HCT116 (cell line): ENCODE measurements at regions of chr1 and their contacts with region 1.

Region 1: GRCh38 chr1:201268604-201269151 is 14.6 kb upstream of the PKP1 start:
- DNase-seq: no peak
- ATAC-seq: no peak
- H3K4me3 ChIP-seq: no peak overlapping the region
- H3K27ac ChIP-seq: no peak overlapping the region
- H3K4me1 ChIP-seq: peaks cover 0 to 31% of the 10 kb centered on the region in 2 experiments; a peak in 2 of 4 replicates
- H3K27me3 ChIP-seq: peaks cover 11% of the 10 kb centered on the region; the same call in 1 of the 2 replicates
- CTCF ChIP-seq: no peak
- POLR2A ChIP-seq: no peak
- RAD21 ChIP-seq: no peak

Region 2: GRCh38 chr1:201309426-201309825 is 40.7 kb after region 1 on chr1:
- CTCF ChIA-PET with region 1: no interaction called
- POLR2A ChIA-PET with region 1: interaction called, 3 read pairs
- RAD21 ChIA-PET with region 1: no interaction called
- intact Hi-C with region 1: loop called (anchors 5 kb)
- DNase-seq: peak; percentile 39
- ATAC-seq: peak; percentile 74
- H3K4me3 ChIP-seq: no peak overlapping the region
- H3K27ac ChIP-seq: no peak overlapping the region
- H3K4me1 ChIP-seq: peaks cover 36 to 60% of the 10 kb centered on the region in 2 experiments
- H3K27me3 ChIP-seq: no peaks in the 10 kb centered on the region
- CTCF ChIP-seq: peak in 2 of 3 experiments; percentile 12 to 51; a peak in 4 of 6 replicates
- POLR2A ChIP-seq: no peak
- RAD21 ChIP-seq: peak; percentile 73